ENCODE measurements at regions of chr2 and their contacts with region 1.

Region 1: DNA sequence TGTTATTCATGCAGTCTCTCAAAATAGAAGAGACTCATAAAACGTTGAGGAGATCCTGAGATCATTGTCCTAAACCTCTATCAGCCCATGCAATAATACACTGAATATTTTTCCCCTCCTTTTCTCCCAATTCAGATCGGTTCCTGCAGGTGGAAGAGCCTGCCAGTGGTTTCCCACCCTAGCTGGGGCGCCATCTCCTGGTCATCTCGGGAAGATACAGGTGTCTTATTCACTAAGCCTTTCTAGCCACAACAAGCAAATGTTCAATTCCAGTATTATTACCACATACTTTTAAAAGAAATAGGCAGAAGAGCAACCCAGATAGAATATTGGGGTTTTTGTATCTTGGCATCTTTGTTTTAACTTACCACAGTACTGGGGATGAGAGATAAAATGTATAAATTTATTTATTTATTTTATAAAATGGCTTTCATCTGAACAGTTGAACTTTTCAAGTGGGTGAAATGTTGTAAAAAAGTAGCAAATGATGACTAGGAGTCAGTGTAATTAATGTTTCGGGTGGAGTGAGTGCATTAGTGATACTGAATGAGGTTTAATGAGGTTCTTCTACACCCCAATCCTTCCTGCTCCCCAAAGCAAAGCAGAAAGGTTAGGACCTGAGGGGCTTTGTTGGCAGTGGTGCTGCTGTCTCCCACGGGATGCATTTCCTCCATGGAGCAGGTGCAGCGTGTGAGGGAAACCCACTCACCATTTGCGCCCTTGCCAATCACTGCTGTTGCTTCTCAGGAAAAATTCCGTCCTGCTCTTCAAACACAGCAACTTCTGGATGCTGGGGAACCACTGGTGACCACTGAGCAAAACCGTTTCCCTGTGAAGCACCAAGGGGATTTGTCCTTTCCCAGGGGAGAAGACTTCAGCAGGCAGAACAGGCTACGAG is 147.1 kb upstream of the FHL2 start:
- DNase-seq: peak; percentile 81
- H3K4me3 Mint-ChIP-seq: peak overlapping the region; percentile 32
- H3K27ac Mint-ChIP-seq: peak overlapping the region; percentile 26
- H3K4me1 Mint-ChIP-seq: peaks cover 17% of the 10 kb centered on the region
- H3K27me3 Mint-ChIP-seq: peaks cover 19% of the 10 kb centered on the region

Region 2: DNA sequence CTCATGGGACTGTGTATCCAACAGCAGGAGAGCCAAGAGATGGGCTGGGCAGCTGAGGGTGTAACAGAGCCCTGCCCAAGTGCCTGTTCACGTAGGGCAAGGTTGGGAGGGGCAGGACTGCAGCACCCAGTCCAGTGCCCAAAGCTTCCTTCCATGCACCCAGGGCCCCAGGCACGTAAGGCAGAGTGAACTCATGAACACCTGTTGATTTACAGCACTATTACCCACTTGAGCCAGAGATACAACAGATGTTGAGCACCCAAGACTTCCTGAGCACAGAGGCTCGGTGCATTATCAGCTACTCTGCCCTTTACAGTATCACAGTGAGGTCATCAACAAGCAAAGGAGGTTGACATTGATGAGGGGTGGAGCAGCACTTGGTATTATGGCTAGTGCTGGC is 96.9 kb before region 1 on chr2:
- CTCF ChIA-PET with region 1: no interaction called
- DNase-seq: no peak
- H3K4me3 Mint-ChIP-seq: no peak overlapping the region
- H3K27ac Mint-ChIP-seq: no peak overlapping the region
- H3K4me1 Mint-ChIP-seq: no peaks in the 10 kb centered on the region
- H3K27me3 Mint-ChIP-seq: peaks cover 14% of the 10 kb centered on the region

Region 3: GRCh38 chr2:105557021-105557920 is 11.3 kb after region 1 on chr2:
- CTCF ChIA-PET with region 1: interaction called, 10 read pairs
- DNase-seq: no peak
- H3K4me3 Mint-ChIP-seq: no peak overlapping the region
- H3K27ac Mint-ChIP-seq: no peak overlapping the region
- H3K4me1 Mint-ChIP-seq: no peaks in the 10 kb centered on the region
- H3K27me3 Mint-ChIP-seq: peaks cover 67% of the 10 kb centered on the region